ENCODE measurements at regions of chr3 and their contacts with region 1.

Region 1: DNA sequence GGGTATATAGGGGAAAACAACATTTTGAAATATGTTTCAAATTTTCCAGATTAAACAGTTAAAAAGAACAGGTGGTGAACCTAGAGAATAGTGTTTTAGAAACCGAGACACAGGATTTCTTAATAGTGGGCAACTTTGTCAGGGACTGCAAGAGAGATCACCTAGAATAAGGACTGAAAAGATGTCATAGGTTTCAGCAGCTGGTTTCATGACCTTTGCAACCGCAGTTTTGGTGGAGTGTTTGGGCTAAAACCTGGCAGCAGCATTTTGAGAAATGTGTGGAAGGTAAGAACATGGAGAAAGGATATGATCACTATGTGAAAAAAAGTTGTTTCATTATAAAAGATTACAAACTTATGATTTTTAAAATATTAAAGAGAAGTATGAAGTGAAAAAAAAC is 34.9 kb downstream of the PRKCI start:
- DNase-seq: no peak
- H3K4me3 ChIP-seq: no peak overlapping the region
- H3K27ac ChIP-seq: no peak overlapping the region
- H3K4me1 ChIP-seq: peaks cover 25% of the 10 kb centered on the region
- H3K27me3 ChIP-seq: no peaks in the 10 kb centered on the region
- CTCF ChIP-seq: no peak

Region 2: DNA sequence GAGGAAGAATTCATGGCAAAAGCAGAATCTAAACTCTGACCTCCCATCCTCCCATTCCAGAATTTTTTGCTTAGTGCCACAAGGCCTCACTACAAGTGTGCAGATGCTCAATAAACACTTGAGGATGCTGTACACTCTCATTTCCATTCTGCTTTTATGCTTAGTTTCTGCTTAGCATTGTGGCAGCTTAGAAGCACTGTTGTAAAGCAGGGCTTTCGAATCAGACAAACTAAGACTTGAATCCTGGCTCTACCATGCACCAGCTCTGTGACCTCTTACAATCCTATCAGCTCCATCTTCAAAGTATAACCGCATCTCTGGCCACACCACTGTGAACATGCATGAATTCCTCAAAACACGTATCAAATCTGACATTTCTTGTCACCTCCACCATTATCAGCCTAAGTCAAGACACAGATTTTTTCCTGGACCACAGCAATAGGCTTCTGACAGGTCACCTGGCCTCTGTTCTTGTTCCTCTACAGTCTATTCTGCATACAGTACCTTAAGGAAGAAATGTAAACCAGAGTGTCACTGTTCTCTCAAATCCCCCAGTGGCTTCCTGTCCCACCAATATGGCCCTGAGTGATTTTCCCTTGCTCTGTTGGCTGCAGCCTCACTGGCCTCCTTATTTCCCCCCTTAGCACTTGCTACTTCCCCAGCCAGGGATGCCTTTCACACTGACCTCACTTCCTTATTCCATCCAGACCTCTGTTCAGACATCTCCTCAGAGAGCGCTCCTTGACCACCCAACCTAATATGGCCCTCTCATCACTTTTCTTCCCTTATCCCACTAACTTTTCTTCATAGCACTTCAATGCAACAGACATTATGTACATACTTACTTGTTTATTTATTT is 67.5 kb before region 1 on chr3:
- CTCF ChIA-PET with region 1: interaction called, 3 read pairs
- POLR2A ChIA-PET with region 1: no interaction called
- intact Hi-C with region 1: loop called (anchors 2 kb)
- DNase-seq: no peak
- H3K4me3 ChIP-seq: no peak overlapping the region
- H3K27ac ChIP-seq: no peak overlapping the region
- H3K4me1 ChIP-seq: no peaks in the 10 kb centered on the region
- H3K27me3 ChIP-seq: no peaks in the 10 kb centered on the region
- CTCF ChIP-seq: peak; percentile 23; the same call in 1 of the 2 replicates

Region 3: GRCh38 chr3:170228093-170228766 is 28.9 kb before region 1 on chr3:
- CTCF ChIA-PET with region 1: no interaction called
- POLR2A ChIA-PET with region 1: no interaction called
- intact Hi-C with region 1: loop called (anchors 2 kb)
- DNase-seq: peak; percentile 57 to 91
- H3K4me3 ChIP-seq: no peak overlapping the region; the same call in 1 of the 2 replicates
- H3K27ac ChIP-seq: peak overlapping the region; percentile 67
- H3K4me1 ChIP-seq: peaks cover 65% of the 10 kb centered on the region
- H3K27me3 ChIP-seq: no peaks in the 10 kb centered on the region
- CTCF ChIP-seq: no peak

Region 4: GRCh38 chr3:170301405-170301804 is 44.3 kb after region 1 on chr3:
- CTCF ChIA-PET with region 1: no interaction called
- POLR2A ChIA-PET with region 1: no interaction called
- intact Hi-C with region 1: no loop called
- DNase-seq: no peak
- H3K4me3 ChIP-seq: no peak overlapping the region
- H3K27ac ChIP-seq: no peak overlapping the region
- H3K4me1 ChIP-seq: no peaks in the 10 kb centered on the region
- H3K27me3 ChIP-seq: no peaks in the 10 kb centered on the region
- CTCF ChIP-seq: no peak

Region 5: GRCh38 chr3:170961616-170962400 is 704.7 kb after region 1 on chr3:
- CTCF ChIA-PET with region 1: no interaction called
- POLR2A ChIA-PET with region 1: no interaction called
- intact Hi-C with region 1: no loop called
- DNase-seq: peak; percentile 30 to 72
- H3K4me3 ChIP-seq: no peak overlapping the region; the same call in 1 of the 2 replicates
- H3K27ac ChIP-seq: peak overlapping the region; percentile 10
- H3K4me1 ChIP-seq: peaks cover 10% of the 10 kb centered on the region
- H3K27me3 ChIP-seq: no peaks in the 10 kb centered on the region
- CTCF ChIP-seq: peak; percentile 98